AG04450 (cell line): ENCODE measurements at regions of chr20 and their contacts with region 1.

Region 1: DNA sequence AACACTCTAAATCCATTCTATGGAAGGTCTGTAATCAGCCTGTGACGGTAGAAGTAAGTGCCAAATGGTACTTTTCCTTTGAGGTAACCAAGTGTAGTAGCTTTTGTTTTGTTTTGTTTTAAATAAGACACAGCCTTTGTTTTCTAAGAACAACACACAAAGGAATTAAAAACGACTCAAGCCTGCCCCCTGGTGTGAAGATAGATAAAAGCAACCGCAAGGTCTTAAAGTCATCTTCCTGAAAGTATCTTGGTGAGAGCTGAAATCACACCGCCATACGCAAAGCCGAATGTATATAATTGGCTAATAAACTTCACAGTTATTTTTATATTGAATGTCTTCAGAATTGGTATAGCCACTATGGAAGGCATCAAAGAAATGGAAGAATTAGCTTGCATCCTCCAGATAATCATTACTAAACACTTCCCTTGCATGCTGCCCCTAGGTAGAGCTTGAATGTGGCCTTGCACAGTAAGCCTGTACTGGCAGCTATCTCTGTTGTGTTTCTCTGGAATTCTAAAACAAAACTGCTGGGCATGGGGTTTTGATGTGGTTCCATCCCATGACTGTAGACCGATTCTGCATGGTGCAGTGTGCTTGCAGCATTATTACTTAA is 95.6 kb downstream of the LAMP5 start:
- DNase-seq: peak; percentile 36
- H3K4me3 ChIP-seq: no peak overlapping the region
- H3K27ac ChIP-seq: no peak overlapping the region
- H3K27me3 ChIP-seq: peaks cover 8% of the 10 kb centered on the region
- CTCF ChIP-seq: peak; percentile 70

Region 2: GRCh38 chr20:8583566-8584043 is 1026.4 kb before region 1 on chr20:
- CTCF ChIA-PET with region 1: no interaction called
- POLR2A ChIA-PET with region 1: no interaction called
- DNase-seq: no peak
- H3K4me3 ChIP-seq: no peak overlapping the region
- H3K27ac ChIP-seq: no peak overlapping the region
- H3K27me3 ChIP-seq: no peaks in the 10 kb centered on the region
- CTCF ChIP-seq: no peak

Region 3: GRCh38 chr20:8756410-8756809 is 853.6 kb before region 1 on chr20:
- CTCF ChIA-PET with region 1: interaction called, 10 read pairs
- POLR2A ChIA-PET with region 1: no interaction called
- DNase-seq: peak; percentile 57
- H3K4me3 ChIP-seq: no peak overlapping the region
- H3K27ac ChIP-seq: no peak overlapping the region
- H3K27me3 ChIP-seq: no peaks in the 10 kb centered on the region
- CTCF ChIP-seq: no peak

Region 4: DNA sequence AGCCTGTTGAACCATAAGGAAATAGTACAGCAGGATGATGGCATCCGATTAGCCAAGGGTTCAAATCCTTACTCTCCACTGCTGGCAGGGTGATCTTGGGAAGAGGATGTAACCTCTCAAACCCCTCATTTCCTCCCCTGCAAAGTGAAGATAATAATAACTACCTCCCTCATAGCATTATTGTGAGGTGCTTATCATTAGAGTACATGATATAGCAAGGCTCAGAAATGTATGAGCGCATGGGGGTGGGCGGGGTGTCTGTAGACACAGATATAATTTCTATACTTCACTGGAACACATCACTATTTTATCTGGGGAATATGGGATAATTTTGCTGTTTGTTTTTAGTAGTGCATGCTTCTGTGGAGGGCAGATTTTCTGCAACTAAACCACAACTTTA is 185.4 kb before region 1 on chr20:
- CTCF ChIA-PET with region 1: interaction called, 34 read pairs
- POLR2A ChIA-PET with region 1: no interaction called
- DNase-seq: no peak
- H3K4me3 ChIP-seq: no peak overlapping the region
- H3K27ac ChIP-seq: no peak overlapping the region
- H3K27me3 ChIP-seq: no peaks in the 10 kb centered on the region
- CTCF ChIP-seq: no peak

Region 5: DNA sequence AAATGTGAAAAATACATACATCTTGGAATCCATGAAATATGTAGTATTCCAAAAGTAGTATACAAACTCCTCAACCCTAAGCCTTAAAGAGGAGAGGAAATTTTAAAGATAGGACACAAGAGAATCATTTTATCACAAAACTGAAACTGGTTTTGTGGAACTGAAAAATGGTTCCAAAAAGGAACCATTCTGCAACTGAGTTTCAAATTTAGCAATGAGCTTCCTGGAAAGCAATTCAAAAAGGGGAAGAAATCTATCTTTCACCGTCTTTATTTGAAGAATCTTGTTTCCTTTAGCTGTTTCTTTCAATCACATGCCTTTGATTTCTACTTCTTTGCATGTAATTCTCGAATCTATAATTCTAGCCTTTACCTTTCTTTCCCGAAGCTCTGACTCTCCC is 127.8 kb before region 1 on chr20:
- CTCF ChIA-PET with region 1: interaction called, 13 read pairs
- POLR2A ChIA-PET with region 1: no interaction called
- DNase-seq: no peak
- H3K4me3 ChIP-seq: no peak overlapping the region
- H3K27ac ChIP-seq: no peak overlapping the region
- H3K27me3 ChIP-seq: no peaks in the 10 kb centered on the region
- CTCF ChIP-seq: no peak

Region 6: GRCh38 chr20:9597545-9597944 is 12.4 kb before region 1 on chr20:
- CTCF ChIA-PET with region 1: interaction called, 16 read pairs
- POLR2A ChIA-PET with region 1: no interaction called
- DNase-seq: no peak
- H3K4me3 ChIP-seq: no peak overlapping the region
- H3K27ac ChIP-seq: no peak overlapping the region
- H3K27me3 ChIP-seq: no peaks in the 10 kb centered on the region
- CTCF ChIP-seq: no peak

Region 7: GRCh38 chr20:9912858-9913434 is 303.0 kb after region 1 on chr20:
- CTCF ChIA-PET with region 1: interaction called, 297 read pairs
- POLR2A ChIA-PET with region 1: interaction called, 3 read pairs
- DNase-seq: peak; percentile 3
- H3K4me3 ChIP-seq: no peak overlapping the region
- H3K27ac ChIP-seq: no peak overlapping the region
- H3K27me3 ChIP-seq: no peaks in the 10 kb centered on the region
- CTCF ChIP-seq: peak; percentile 86